ENCODE measurements at regions of chr2 and their contacts with region 1.

Region 1: GRCh38 chr2:30115141-30115980 is 31.4 kb upstream of the YPEL5 start:
- DNase-seq: peak; percentile 82
- ATAC-seq: peak; percentile 81
- H3K4me3 ChIP-seq: no peak overlapping the region
- H3K27ac ChIP-seq: no peak overlapping the region
- H3K4me1 ChIP-seq: peaks cover 13% of the 10 kb centered on the region
- H3K27me3 ChIP-seq: peaks cover 11% of the 10 kb centered on the region
- CTCF ChIP-seq: peak; percentile 96
- POLR2A ChIP-seq: no peak
- RAD21 ChIP-seq: peak; percentile 93

Region 2: GRCh38 chr2:30095402-30095801 is 20.0 kb before region 1 on chr2:
- CTCF ChIA-PET with region 1: interaction called, 10 read pairs
- POLR2A ChIA-PET with region 1: no interaction called
- dilution Hi-C with region 1: no loop called
- in situ Hi-C with region 1: no loop called
- intact Hi-C with region 1: loop called (anchors 1 kb)
- DNase-seq: peak; percentile 7
- ATAC-seq: no peak
- H3K4me3 ChIP-seq: no peak overlapping the region
- H3K27ac ChIP-seq: no peak overlapping the region
- H3K4me1 ChIP-seq: no peaks in the 10 kb centered on the region
- H3K27me3 ChIP-seq: peaks cover 16% of the 10 kb centered on the region
- CTCF ChIP-seq: no peak
- POLR2A ChIP-seq: no peak
- RAD21 ChIP-seq: no peak

Region 3: DNA sequence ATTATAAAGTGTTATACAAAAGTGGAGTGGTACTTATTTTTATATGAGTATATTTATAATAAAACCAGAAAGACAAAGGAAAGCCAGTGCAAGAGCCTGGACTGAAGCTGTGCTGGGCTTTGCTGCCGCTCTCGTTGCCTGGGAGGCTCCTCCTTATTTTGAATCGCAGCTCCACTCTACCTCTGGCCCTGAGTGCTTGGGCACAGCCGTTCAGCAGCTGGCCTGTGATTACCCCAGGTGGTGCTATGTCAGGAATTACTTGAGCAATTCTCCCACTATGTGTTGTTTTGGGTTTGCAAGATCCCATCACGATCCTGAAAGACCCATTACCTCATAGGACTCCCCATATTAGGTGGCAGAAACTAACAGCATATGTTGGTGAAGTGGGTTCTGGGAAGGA is 278.7 kb after region 1 on chr2:
- CTCF ChIA-PET with region 1: no interaction called
- POLR2A ChIA-PET with region 1: no interaction called
- dilution Hi-C with region 1: no loop called
- in situ Hi-C with region 1: no loop called
- intact Hi-C with region 1: no loop called
- DNase-seq: no peak
- ATAC-seq: no peak
- H3K4me3 ChIP-seq: no peak overlapping the region
- H3K27ac ChIP-seq: no peak overlapping the region
- H3K4me1 ChIP-seq: peaks cover 8% of the 10 kb centered on the region
- H3K27me3 ChIP-seq: peaks cover under 1% of the 10 kb centered on the region; the same call in 1 of the 2 replicates
- CTCF ChIP-seq: no peak
- POLR2A ChIP-seq: no peak
- RAD21 ChIP-seq: no peak

Measured in IMR-90 (cell line).